Activated naive CD4-positive, alpha-beta T cell treated with anti-CD3 and anti-CD28 coated beads, Interleukin-2, amount 10 ng/mL, durations not matched to agents 7 days and 5 days (primary cell): ENCODE measurements at regions of chr10 and their contacts with region 1.

Region 1: GRCh38 chr10:79374312-79375191 is 27.3 kb downstream of the PPIF start:
- DNase-seq: peak; percentile 82
- H3K4me3 Mint-ChIP-seq: no peak overlapping the region
- H3K27ac Mint-ChIP-seq: no peak overlapping the region
- H3K4me1 Mint-ChIP-seq: peaks cover 2% of the 10 kb centered on the region
- H3K27me3 Mint-ChIP-seq: peaks cover 23% of the 10 kb centered on the region

Region 2: GRCh38 chr10:79358783-79359182 is 15.8 kb before region 1 on chr10:
- CTCF ChIA-PET with region 1: interaction called, 22 read pairs
- DNase-seq: no peak
- H3K4me3 Mint-ChIP-seq: no peak overlapping the region
- H3K27ac Mint-ChIP-seq: no peak overlapping the region
- H3K4me1 Mint-ChIP-seq: peaks cover 22% of the 10 kb centered on the region
- H3K27me3 Mint-ChIP-seq: peaks cover 6% of the 10 kb centered on the region

Region 3: DNA sequence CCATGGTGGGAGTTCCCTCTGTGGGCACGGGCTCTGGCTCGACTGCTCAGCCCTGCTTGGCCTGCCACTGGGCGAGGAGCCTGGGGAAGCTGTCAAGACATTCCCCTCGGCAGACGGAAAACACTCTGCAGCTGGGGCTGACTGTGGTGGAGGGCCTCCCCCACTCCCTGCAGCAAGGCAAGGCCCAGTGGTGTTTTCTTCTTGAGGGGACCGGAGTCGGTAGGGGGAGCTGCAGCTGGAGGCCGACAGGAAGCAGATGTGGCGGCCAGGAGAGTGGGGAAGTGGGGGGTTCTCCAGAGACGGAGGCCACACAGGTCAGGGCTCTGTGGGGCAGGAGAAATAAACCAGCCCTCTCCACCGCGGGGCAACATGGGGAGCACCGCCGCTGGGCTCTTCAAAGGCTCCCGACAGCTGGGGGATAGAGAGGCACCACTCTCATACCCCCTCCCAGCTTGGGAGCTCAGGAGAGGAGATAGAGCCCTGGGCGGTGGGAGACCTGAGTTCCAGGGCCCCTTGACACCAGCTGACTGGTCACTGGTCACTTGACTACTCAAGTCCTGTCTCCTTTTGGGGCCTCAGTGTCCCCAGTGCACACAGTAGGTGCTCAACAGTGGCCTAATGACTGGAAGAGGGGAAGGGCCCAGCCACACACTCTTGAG is 16.1 kb after region 1 on chr10:
- CTCF ChIA-PET with region 1: interaction called, 32 read pairs
- DNase-seq: peak; percentile 20
- H3K4me3 Mint-ChIP-seq: no peak overlapping the region
- H3K27ac Mint-ChIP-seq: no peak overlapping the region
- H3K4me1 Mint-ChIP-seq: no peaks in the 10 kb centered on the region
- H3K27me3 Mint-ChIP-seq: peaks cover 17% of the 10 kb centered on the region

Region 4: GRCh38 chr10:79400146-79401004 is 25.8 kb after region 1 on chr10:
- CTCF ChIA-PET with region 1: interaction called, 16 read pairs
- DNase-seq: peak; percentile 70
- H3K4me3 Mint-ChIP-seq: no peak overlapping the region
- H3K27ac Mint-ChIP-seq: no peak overlapping the region
- H3K4me1 Mint-ChIP-seq: no peaks in the 10 kb centered on the region
- H3K27me3 Mint-ChIP-seq: peaks cover 48% of the 10 kb centered on the region

Region 5: DNA sequence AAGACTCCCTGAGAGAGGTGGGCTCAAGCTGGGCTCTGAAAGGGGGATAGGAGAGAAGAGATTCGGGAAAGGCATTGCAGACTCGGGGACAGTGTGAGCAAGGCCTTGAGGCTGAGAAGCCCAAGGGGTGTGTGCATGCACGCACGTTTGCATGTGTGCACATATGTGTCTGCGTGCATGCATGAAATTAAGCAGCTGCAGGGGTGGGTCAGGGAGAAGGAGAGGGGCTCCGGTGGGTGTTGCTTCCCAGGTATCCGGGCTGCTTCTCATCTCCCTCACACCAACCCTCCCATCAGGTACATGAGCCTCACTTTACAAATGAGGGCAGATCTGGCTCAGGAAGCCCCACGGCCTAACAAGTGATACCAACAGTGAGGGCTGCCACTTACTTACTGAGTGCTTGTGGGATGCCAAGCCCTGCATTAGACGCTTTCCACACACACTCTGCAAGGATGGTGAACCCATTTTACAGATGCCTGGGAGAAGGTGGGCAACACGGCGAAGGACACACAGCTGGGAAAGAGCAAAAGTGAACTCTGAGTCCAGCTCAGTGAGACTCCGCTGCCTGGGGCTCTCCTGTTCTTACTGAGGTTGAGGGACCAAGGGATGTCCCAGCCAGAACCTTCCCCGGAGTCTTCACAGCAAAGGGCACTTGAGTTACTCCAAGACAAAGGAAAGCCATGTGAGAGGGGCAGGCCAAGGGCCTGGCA is 44.5 kb after region 1 on chr10:
- CTCF ChIA-PET with region 1: interaction called, 10 read pairs
- DNase-seq: no peak
- H3K4me3 Mint-ChIP-seq: no peak overlapping the region
- H3K27ac Mint-ChIP-seq: no peak overlapping the region
- H3K4me1 Mint-ChIP-seq: no peaks in the 10 kb centered on the region
- H3K27me3 Mint-ChIP-seq: peaks cover 4% of the 10 kb centered on the region

Region 6: DNA sequence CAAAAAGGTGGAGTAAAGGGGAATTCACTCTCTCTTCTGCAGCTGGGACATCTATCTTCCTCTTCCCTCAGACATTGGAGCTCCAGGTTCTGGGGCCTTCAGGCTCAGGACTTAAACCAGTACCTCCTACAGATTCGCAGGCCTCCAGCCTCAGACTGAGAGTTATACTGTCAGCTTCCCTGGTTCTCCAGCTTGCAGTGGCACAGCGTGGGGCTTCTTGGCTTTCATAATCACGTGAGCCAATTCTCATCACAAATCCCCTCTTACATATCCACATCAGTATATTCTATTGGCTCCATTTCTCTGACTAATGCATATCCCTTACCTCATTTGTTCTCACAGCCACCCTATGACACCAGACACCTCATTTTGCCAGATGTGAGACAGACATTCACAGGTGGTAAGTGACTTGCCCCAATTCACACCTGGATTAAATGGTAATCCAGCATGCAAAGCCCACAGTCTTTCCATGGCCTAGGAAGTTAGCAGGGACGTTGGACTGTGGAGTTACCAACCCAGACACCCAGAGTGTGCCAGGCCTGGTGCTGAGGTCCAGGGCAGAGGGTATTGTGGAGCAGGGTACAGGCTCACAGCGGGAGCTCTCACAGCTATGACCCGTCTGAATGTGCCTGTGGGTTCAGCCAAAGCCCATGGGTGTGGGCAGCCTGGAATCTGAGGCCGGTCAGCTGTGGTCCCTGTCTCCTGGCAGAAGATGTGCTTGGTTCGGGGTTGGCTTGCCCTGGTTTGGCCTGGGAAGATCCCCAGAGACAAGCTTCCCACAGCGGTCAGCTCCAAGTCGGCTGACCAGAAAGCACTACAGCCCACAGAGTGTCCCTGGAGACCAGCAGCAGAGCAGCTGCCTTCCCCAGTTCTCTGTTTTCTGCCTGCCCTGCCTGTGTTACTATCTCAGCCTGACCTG is 89.3 kb after region 1 on chr10:
- CTCF ChIA-PET with region 1: interaction called, 32 read pairs
- DNase-seq: no peak
- H3K4me3 Mint-ChIP-seq: no peak overlapping the region
- H3K27ac Mint-ChIP-seq: no peak overlapping the region
- H3K4me1 Mint-ChIP-seq: no peaks in the 10 kb centered on the region
- H3K27me3 Mint-ChIP-seq: peaks cover 10% of the 10 kb centered on the region

Region 7: GRCh38 chr10:79487296-79488194 is 113.0 kb after region 1 on chr10:
- CTCF ChIA-PET with region 1: interaction called, 35 read pairs
- DNase-seq: peak; percentile 39
- H3K4me3 Mint-ChIP-seq: no peak overlapping the region
- H3K27ac Mint-ChIP-seq: no peak overlapping the region
- H3K4me1 Mint-ChIP-seq: no peaks in the 10 kb centered on the region
- H3K27me3 Mint-ChIP-seq: peaks cover 30% of the 10 kb centered on the region